Posterior vena cava (tissue), 2 donors: ENCODE measurements at regions of chr13 and their contacts with region 1.

Region 1: GRCh38 chr13:28204690-28205443 is 66.5 kb downstream of the PAN3 start:
- DNase-seq: no peak

Region 2: GRCh38 chr13:28220166-28220565 is 15.3 kb after region 1 on chr13:
- intact Hi-C with region 1: loop called in 1 of 2 experiments (anchors 1 kb)
- DNase-seq: no peak